CD14-positive monocyte (primary cell): ENCODE measurements at regions of chr22 and their contacts with region 1.

Region 1: GRCh38 chr22:37199103-37199759 is 11.2 kb upstream of the C1QTNF6 start:
- DNase-seq: peak; percentile 97
- H3K4me3 ChIP-seq: peak overlapping the region; percentile 57 to 79 (median 59)
- H3K4me3 Mint-ChIP-seq: peak overlapping the region; percentile 79 to 82
- H3K27ac ChIP-seq: peak overlapping the region; percentile 79 to 81
- H3K27ac Mint-ChIP-seq: peak overlapping the region; percentile 78 to 93 (median 90)
- H3K4me1 ChIP-seq: peaks cover 14 to 22% of the 10 kb centered on the region in 2 donors
- H3K4me1 Mint-ChIP-seq: peaks cover 13% of the 10 kb centered on the region
- H3K27me3 ChIP-seq: no peaks in the 10 kb centered on the region
- H3K27me3 Mint-ChIP-seq: peaks cover 0 to 4% (median 1%) of the 10 kb centered on the region in 3 donors
- CTCF ChIP-seq: peak; percentile 78

Region 2: DNA sequence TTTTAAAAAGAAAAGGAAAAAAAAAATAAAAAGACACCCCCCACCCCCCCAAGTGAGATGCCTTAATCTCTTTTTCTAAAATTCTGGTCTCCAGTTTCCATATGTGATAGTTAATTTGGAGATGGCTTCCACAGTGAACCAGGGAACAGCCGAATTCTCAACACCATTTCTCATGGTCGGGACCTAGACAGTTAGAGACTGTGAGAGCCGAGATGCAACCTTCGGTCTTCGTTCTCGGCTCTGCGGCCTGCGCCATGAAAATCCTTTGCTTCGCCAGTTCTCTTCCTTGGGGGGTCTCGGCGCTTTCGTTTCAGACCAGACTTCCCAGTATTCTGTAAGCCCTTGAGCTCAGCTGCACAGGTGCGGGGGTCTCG is 496.4 kb before region 1 on chr22:
- intact Hi-C with region 1: no loop called
- DNase-seq: no peak
- H3K4me3 ChIP-seq: no peak overlapping the region
- H3K4me3 Mint-ChIP-seq: peak overlapping the region in 1 of 2 donors; percentile 72
- H3K27ac ChIP-seq: no peak overlapping the region
- H3K27ac Mint-ChIP-seq: no peak overlapping the region
- H3K4me1 ChIP-seq: no peaks in the 10 kb centered on the region
- H3K4me1 Mint-ChIP-seq: peaks cover 4% of the 10 kb centered on the region
- H3K27me3 ChIP-seq: peaks cover 48 to 61% of the 10 kb centered on the region in 2 donors
- H3K27me3 Mint-ChIP-seq: peaks cover 62 to 75% (median 71%) of the 10 kb centered on the region in 3 donors
- CTCF ChIP-seq: no peak

Region 3: GRCh38 chr22:36884349-36885117 is 314.7 kb before region 1 on chr22:
- intact Hi-C with region 1: no loop called
- DNase-seq: peak; percentile 18 to 42 (median 40)
- H3K4me3 ChIP-seq: peak overlapping the region in 1 of 3 experiments; percentile 37
- H3K4me3 Mint-ChIP-seq: no peak overlapping the region
- H3K27ac ChIP-seq: peak overlapping the region in 1 of 2 donors; percentile 60
- H3K27ac Mint-ChIP-seq: peak overlapping the region in 5 of 7 donors; percentile 7 to 79 (median 73)
- H3K4me1 ChIP-seq: peaks cover 22 to 23% of the 10 kb centered on the region in 2 donors
- H3K4me1 Mint-ChIP-seq: peaks cover 21% of the 10 kb centered on the region
- H3K27me3 ChIP-seq: no peaks in the 10 kb centered on the region
- H3K27me3 Mint-ChIP-seq: peaks cover under 1 to 5% (median 2%) of the 10 kb centered on the region in 3 donors
- CTCF ChIP-seq: no peak

Region 4: GRCh38 chr22:36948273-36949225 is 250.7 kb before region 1 on chr22:
- intact Hi-C with region 1: no loop called
- DNase-seq: no peak
- H3K4me3 ChIP-seq: no peak overlapping the region
- H3K4me3 Mint-ChIP-seq: no peak overlapping the region
- H3K27ac ChIP-seq: no peak overlapping the region
- H3K27ac Mint-ChIP-seq: no peak overlapping the region
- H3K4me1 ChIP-seq: no peaks in the 10 kb centered on the region
- H3K4me1 Mint-ChIP-seq: peaks cover 2% of the 10 kb centered on the region
- H3K27me3 ChIP-seq: no peaks in the 10 kb centered on the region
- H3K27me3 Mint-ChIP-seq: peaks cover 1 to 4% (median 4%) of the 10 kb centered on the region in 3 donors
- CTCF ChIP-seq: no peak

Region 5: DNA sequence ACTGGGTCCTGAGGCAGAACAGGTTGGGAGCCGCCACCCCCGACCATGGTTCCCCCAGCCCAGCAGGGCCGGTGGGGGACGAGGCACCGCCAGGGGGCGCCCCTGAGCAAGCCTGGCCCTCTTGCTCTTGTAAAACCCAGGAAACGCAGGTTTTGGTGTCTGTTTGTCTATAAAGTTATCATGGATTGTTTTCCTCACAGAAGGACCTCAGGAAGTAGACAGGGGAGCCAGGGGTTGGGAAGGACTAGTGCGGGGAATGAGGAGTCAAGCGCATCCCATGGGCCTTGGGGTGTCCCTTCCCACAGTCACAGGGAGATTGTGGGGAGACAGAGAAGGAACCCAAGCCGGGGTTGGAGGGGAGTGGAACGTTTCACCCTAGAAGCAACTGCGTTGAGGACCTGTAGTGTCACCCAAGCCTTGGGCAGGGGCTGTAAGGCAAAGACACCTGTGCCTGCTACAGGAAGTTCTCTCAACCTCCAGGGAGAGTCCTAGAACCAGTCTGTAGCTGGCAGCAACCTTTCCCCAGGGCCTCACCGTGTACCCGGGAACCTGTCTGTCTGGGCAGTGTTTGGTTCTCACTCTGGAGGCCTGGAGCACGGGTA is 121.2 kb before region 1 on chr22:
- intact Hi-C with region 1: loop called (anchors 5 kb)
- DNase-seq: peak; percentile 42 to 59 (median 55)
- H3K4me3 ChIP-seq: no peak overlapping the region
- H3K4me3 Mint-ChIP-seq: no peak overlapping the region
- H3K27ac ChIP-seq: no peak overlapping the region
- H3K27ac Mint-ChIP-seq: no peak overlapping the region
- H3K4me1 ChIP-seq: peaks cover 5 to 10% of the 10 kb centered on the region in 2 donors
- H3K4me1 Mint-ChIP-seq: peaks cover 18% of the 10 kb centered on the region
- H3K27me3 ChIP-seq: peaks cover 0 to 2% of the 10 kb centered on the region in 2 donors
- H3K27me3 Mint-ChIP-seq: peaks cover 7 to 9% (median 7%) of the 10 kb centered on the region in 3 donors
- CTCF ChIP-seq: peak; percentile 99

Region 6: GRCh38 chr22:37166675-37167066 is 32.6 kb before region 1 on chr22:
- intact Hi-C with region 1: loop called (anchors 1 to 2 kb)
- DNase-seq: peak; percentile 73 to 78 (median 73)
- H3K4me3 ChIP-seq: no peak overlapping the region
- H3K4me3 Mint-ChIP-seq: peak overlapping the region; percentile 34 to 61
- H3K27ac ChIP-seq: no peak overlapping the region
- H3K27ac Mint-ChIP-seq: peak overlapping the region in 1 of 7 donors; percentile 67
- H3K4me1 ChIP-seq: peaks cover 0 to 4% of the 10 kb centered on the region in 2 donors
- H3K4me1 Mint-ChIP-seq: peaks cover 4% of the 10 kb centered on the region
- H3K27me3 ChIP-seq: no peaks in the 10 kb centered on the region
- H3K27me3 Mint-ChIP-seq: peaks cover 7 to 12% (median 7%) of the 10 kb centered on the region in 3 donors
- CTCF ChIP-seq: peak; percentile 88

Region 7: GRCh38 chr22:37259540-37260029 is 60.4 kb after region 1 on chr22:
- intact Hi-C with region 1: loop called in 1 of 2 experiments (anchors 2 kb)
- DNase-seq: peak in 2 of 3 donors; percentile 55 to 69
- H3K4me3 ChIP-seq: peak overlapping the region in 1 of 3 experiments; percentile 2
- H3K4me3 Mint-ChIP-seq: peak overlapping the region; percentile 50 to 76
- H3K27ac ChIP-seq: no peak overlapping the region
- H3K27ac Mint-ChIP-seq: peak overlapping the region in 3 of 7 donors; percentile 19 to 77 (median 75)
- H3K4me1 ChIP-seq: peaks cover 15 to 25% of the 10 kb centered on the region in 2 donors
- H3K4me1 Mint-ChIP-seq: peaks cover 20% of the 10 kb centered on the region
- H3K27me3 ChIP-seq: peaks cover 0 to 2% of the 10 kb centered on the region in 2 donors
- H3K27me3 Mint-ChIP-seq: peaks cover 11 to 20% (median 14%) of the 10 kb centered on the region in 3 donors
- CTCF ChIP-seq: peak; percentile 76